PC-9 (cell line): ENCODE measurements at regions of chr13 and their contacts with region 1.

Region 1: GRCh38 chr13:72444999-72445398 is 282.4 kb downstream of the MZT1 start:
- DNase-seq: no peak
- H3K4me3 ChIP-seq: no peak overlapping the region
- H3K27ac ChIP-seq: no peak overlapping the region
- H3K4me1 ChIP-seq: no peaks in the 10 kb centered on the region
- H3K27me3 ChIP-seq: no peaks in the 10 kb centered on the region
- CTCF ChIP-seq: no peak

Region 2: GRCh38 chr13:72194556-72194955 is 250.4 kb before region 1 on chr13:
- CTCF ChIA-PET with region 1: interaction called, 13 read pairs
- POLR2A ChIA-PET with region 1: no interaction called
- intact Hi-C with region 1: no loop called
- DNase-seq: no peak
- H3K4me3 ChIP-seq: no peak overlapping the region
- H3K27ac ChIP-seq: no peak overlapping the region
- H3K4me1 ChIP-seq: no peaks in the 10 kb centered on the region
- H3K27me3 ChIP-seq: no peaks in the 10 kb centered on the region
- CTCF ChIP-seq: no peak